Left cardiac atrium (tissue), 4 donors: ENCODE measurements at regions of chr19 and their contacts with region 1.

Region 1: DNA sequence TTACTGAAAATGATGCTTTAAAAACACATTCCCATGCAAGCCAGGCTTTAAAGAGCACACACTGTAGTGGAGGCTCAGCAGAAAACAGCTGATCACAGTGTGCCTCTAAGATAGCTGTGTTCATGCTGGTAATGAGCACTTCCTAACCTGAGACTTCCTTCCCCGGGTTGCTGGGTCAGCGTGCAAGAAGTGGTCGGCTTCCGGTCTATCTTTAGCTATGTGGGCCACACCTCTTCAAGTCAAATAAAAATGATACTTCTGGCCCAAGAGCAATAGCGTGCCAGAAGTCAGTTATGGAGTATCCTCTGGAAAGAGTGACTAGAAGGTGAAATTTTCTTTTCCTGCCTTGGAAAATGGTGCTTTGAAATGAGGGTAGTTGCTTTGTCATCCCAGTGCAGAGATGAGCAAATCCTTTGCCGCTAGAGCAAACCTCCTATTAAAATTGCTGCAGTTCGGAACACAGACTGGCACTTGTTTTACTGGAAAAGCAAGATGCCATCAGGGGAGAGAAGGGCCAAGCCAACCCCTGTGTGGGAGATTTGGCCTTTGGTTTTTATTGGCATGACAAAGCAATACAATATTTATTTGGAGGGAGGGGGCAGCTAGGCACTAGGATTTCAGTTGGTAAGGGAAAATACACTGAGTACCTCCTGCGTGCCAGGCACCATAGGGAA is 64.2 kb downstream of the ARHGAP35 start:
- DNase-seq: peak; percentile 50
- ATAC-seq: peak; percentile 50 to 61

Region 2: GRCh38 chr19:46840136-46840942 is 84.7 kb before region 1 on chr19:
- intact Hi-C with region 1: no loop called
- DNase-seq: peak; percentile 61
- ATAC-seq: peak; percentile 61 to 62

Region 3: DNA sequence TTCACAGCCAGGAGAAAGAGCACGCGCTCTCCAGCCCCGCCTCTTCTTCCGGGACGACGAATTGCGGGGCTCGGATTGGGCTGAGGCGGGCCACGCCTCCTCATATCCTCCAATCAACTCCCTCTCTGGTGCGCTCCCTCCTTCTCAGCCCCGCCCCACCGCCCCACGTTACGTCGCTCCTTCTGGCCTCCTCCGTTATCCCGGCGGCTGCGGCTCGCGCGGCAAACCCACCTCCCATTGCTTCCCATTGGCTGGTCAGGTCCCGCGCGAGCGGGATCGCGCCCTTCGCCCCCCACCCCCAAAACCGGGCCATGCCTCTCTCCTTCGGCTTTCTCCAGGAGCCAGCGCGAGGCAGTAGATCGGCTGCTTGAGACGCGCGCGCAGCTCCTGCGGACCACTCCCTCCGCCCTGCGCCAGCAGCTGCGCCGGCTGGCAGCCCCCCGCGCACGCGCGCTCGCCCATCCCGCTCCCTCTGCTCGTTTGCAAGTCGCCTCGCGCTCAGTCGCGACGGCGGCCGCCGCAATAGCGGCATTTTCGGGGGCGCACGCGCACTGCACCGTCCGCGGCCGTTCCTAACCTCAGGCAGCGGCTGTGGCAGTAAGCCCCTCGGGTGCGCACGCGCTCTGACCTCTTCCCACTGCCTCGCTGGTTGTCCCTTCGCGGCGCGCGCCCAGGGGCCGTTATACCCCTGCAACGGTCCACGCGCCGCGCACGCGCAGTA is 64.7 kb before region 1 on chr19:
- intact Hi-C with region 1: loop called in 1 of 2 experiments (anchors 10 kb)
- DNase-seq: peak; percentile 99
- ATAC-seq: peak; percentile 89 to 93